Right cardiac atrium (tissue), 5 donors: ENCODE measurements at regions of chr16 and their contacts with region 1.

Region 1: GRCh38 chr16:11797166-11797956 is at the start of gene ZC3H7A:
- DNase-seq: peak; percentile 98 to 99 (median 99)
- ATAC-seq: peak; percentile 99
- H3K4me3 ChIP-seq: peak within 1 kb of the TSS; percentile 93
- H3K27ac ChIP-seq: peak within 1 kb of the TSS; percentile 97
- H3K4me1 ChIP-seq: peaks cover 16% of the 10 kb centered on the region
- H3K27me3 ChIP-seq: no peaks in the 10 kb centered on the region
- total RNA-seq, gene ZC3H7A: 29.2 to 32.2 (median 31.0) TPM

Region 2: GRCh38 chr16:11181899-11182279 is 615.5 kb before region 1 on chr16:
- intact Hi-C with region 1: no loop called
- DNase-seq: no peak
- ATAC-seq: no peak
- H3K4me3 ChIP-seq: no peak overlapping the region
- H3K27ac ChIP-seq: no peak overlapping the region
- H3K4me1 ChIP-seq: no peaks in the 10 kb centered on the region
- H3K27me3 ChIP-seq: no peaks in the 10 kb centered on the region

Region 3: GRCh38 chr16:11396241-11397048 is 400.9 kb before region 1 on chr16:
- intact Hi-C with region 1: loop called in 1 of 4 experiments (anchors 10 kb)
- DNase-seq: peak; percentile 71 to 89 (median 89)
- ATAC-seq: peak; percentile 77 to 81
- H3K4me3 ChIP-seq: no peak overlapping the region
- H3K27ac ChIP-seq: no peak overlapping the region
- H3K4me1 ChIP-seq: no peaks in the 10 kb centered on the region
- H3K27me3 ChIP-seq: no peaks in the 10 kb centered on the region

Region 4: DNA sequence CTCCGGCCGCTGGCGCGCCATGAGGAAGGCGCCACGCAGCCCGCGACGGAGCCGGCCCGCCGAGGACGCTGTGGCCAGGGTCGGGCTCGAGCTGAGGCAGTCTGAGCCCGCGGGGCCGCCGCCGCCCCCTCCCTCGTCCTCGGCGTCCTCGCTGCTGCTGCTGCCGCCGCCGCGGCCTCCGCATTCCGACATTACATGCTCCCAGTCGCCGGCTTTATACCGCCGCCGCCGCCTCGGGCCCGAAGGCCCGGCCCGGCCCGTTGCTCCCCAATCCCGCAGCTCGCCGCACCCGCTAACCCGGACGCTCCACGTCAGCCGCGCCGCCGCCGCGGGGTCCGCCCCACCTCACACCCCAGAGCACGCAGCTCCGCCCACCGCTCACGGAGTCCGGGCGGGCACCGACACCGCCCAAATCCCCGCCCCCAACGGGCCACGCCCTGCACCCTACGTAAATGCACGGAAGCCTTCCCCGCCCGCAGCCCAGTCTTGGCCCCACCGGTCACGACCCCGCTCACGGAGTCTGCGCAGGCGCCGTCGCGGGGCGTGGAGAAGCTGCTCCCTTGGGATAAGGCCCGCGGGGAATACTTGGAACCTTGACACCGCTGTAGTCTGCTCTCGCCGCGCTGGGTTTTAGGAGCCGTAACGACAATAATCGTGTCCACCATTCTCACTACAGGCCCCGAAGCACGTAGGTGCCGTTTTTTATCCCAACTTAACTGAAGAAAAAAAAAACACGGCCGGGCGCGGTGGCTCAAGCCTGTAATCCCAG is 54.6 kb before region 1 on chr16 and contains the start of gene TXNDC11:
- intact Hi-C with region 1: loop called in 2 of 4 experiments (anchors 5 kb)
- DNase-seq: peak; percentile 100
- ATAC-seq: peak; percentile 98 to 99
- H3K4me3 ChIP-seq: peak within 1 kb of the TSS; percentile 97
- H3K27ac ChIP-seq: peak within 1 kb of the TSS; percentile 86
- H3K4me1 ChIP-seq: peaks cover 2% of the 10 kb centered on the region
- H3K27me3 ChIP-seq: no peaks in the 10 kb centered on the region
- total RNA-seq, gene TXNDC11: 22.0 to 29.4 (median 23.9) TPM

Region 5: DNA sequence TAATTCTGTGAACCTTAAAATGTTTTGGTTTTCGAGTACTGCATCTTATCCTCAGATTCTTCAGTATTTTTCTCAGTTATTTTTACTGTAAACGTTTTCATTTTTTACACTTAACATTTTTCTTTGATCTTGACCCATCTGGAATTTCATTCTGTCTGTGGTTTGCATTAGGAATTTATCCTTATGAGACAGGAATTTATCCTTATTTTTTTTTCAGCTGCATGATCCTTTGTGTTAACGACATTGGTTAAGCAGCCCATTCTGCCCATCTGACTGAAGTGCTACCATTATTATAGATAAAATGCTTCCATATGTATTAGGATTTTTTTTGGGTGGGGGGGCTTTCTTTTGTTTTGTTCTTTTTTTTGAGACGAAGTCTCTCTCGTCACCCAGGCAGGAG is 220.2 kb after region 1 on chr16:
- intact Hi-C with region 1: no loop called
- DNase-seq: no peak
- ATAC-seq: no peak
- H3K4me3 ChIP-seq: no peak overlapping the region
- H3K27ac ChIP-seq: no peak overlapping the region
- H3K4me1 ChIP-seq: peaks cover 1% of the 10 kb centered on the region
- H3K27me3 ChIP-seq: no peaks in the 10 kb centered on the region